ENCODE measurements at regions of chr3 and their contacts with region 1.

Region 1: DNA sequence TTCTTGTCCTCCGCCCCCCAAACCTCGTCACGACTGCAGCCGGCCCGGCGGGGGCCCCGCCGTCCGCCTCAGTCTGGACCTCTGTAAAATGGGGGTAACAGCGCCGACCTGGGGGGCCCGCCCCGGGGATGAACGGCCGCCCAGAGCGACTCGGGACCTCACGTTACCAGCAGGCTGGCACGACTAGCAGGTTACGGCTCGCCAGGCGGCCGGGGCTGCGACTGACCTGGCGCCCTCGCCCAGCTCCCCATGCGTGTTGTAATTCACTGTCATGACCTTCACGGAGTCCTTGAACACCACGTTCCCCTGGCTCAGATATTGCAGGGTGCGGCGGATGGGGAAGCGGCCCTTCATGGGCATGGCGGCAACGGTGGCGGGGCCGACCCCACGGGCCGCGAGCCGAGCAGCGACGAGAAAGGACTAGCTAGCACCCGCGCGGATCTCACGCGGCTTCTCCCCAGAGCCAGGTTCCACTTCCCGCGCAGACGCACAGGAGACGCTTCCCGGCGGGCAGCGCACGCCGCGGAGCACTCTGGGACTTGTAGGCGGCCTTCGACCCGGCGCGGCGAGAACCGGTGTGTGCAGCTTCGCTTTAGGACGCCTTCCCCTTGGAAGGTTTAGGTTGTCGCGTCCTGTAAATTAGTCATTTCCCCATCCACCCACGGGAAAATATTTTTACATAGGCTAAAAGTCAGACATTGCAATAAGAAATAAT is at the start of gene MRPS25:
- DNase-seq: peak; percentile 86 to 90 (median 89)
- H3K4me3 ChIP-seq: peak within 1 kb of the TSS; percentile 19 to 78
- H3K4me3 Mint-ChIP-seq: peak within 1 kb of the TSS; percentile 93 to 99 (median 96)
- H3K27ac ChIP-seq: peak within 1 kb of the TSS; percentile 79
- H3K27ac Mint-ChIP-seq: peak within 1 kb of the TSS; percentile 88 to 98 (median 96)
- H3K4me1 ChIP-seq: peaks cover 18% of the 10 kb centered on the region
- H3K4me1 Mint-ChIP-seq: peaks cover 11 to 34% (median 23%) of the 10 kb centered on the region in 4 donors
- H3K27me3 ChIP-seq: no peaks in the 10 kb centered on the region
- H3K27me3 Mint-ChIP-seq: no peaks in the 10 kb centered on the region
- total RNA-seq, gene MRPS25: 77.1 to 80.3 TPM

Region 2: GRCh38 chr3:14890476-14890875 is 174.5 kb before region 1 on chr3:
- CTCF ChIA-PET with region 1: no interaction called
- POLR2A ChIA-PET with region 1: no interaction called
- intact Hi-C with region 1: no loop called
- DNase-seq: peak in 2 of 5 donors; percentile 14 to 24
- H3K4me3 ChIP-seq: no peak overlapping the region
- H3K4me3 Mint-ChIP-seq: peak overlapping the region in 5 of 8 donors; percentile 23 to 57 (median 29)
- H3K27ac ChIP-seq: no peak overlapping the region
- H3K27ac Mint-ChIP-seq: peak overlapping the region in 4 of 7 donors; percentile 23 to 59 (median 32)
- H3K4me1 ChIP-seq: peaks cover 22% of the 10 kb centered on the region
- H3K4me1 Mint-ChIP-seq: peaks cover 21 to 42% (median 31%) of the 10 kb centered on the region in 4 donors
- H3K27me3 ChIP-seq: no peaks in the 10 kb centered on the region
- H3K27me3 Mint-ChIP-seq: peaks cover 1 to 3% of the 10 kb centered on the region in 2 donors

Region 3: GRCh38 chr3:15051531-15051930 is 13.5 kb before region 1 on chr3:
- CTCF ChIA-PET with region 1: interaction called, 10 read pairs
- POLR2A ChIA-PET with region 1: interaction called, 4 read pairs
- intact Hi-C with region 1: no loop called
- DNase-seq: peak in 4 of 5 donors; percentile 17 to 29 (median 22)
- H3K4me3 ChIP-seq: no peak overlapping the region
- H3K4me3 Mint-ChIP-seq: no peak overlapping the region
- H3K27ac ChIP-seq: no peak overlapping the region
- H3K27ac Mint-ChIP-seq: peak overlapping the region in 5 of 7 donors; percentile 10 to 55 (median 22)
- H3K4me1 ChIP-seq: peaks cover 23% of the 10 kb centered on the region
- H3K4me1 Mint-ChIP-seq: peaks cover 10 to 30% (median 17%) of the 10 kb centered on the region in 4 donors
- H3K27me3 ChIP-seq: no peaks in the 10 kb centered on the region
- H3K27me3 Mint-ChIP-seq: no peaks in the 10 kb centered on the region

Region 4: GRCh38 chr3:15098503-15099363 is 33.7 kb after region 1 on chr3 and contains the start of gene RBSN:
- CTCF ChIA-PET with region 1: interaction called, 4 read pairs
- POLR2A ChIA-PET with region 1: interaction called, 37 read pairs
- intact Hi-C with region 1: loop called (anchors 1 kb)
- DNase-seq: peak; percentile 96 to 98 (median 96)
- H3K4me3 ChIP-seq: peak within 1 kb of the TSS; percentile 61 to 73
- H3K4me3 Mint-ChIP-seq: peak within 1 kb of the TSS; percentile 88 to 99 (median 96)
- H3K27ac ChIP-seq: peak within 1 kb of the TSS; percentile 95
- H3K27ac Mint-ChIP-seq: peak within 1 kb of the TSS; percentile 89 to 99 (median 99)
- H3K4me1 ChIP-seq: peaks cover 22% of the 10 kb centered on the region
- H3K4me1 Mint-ChIP-seq: peaks cover 19 to 35% (median 27%) of the 10 kb centered on the region in 4 donors
- H3K27me3 ChIP-seq: no peaks in the 10 kb centered on the region
- H3K27me3 Mint-ChIP-seq: peaks cover 1 to 2% of the 10 kb centered on the region in 2 donors
- total RNA-seq, gene RBSN: 33.2 to 34.7 TPM

Measured in CD4-positive, alpha-beta memory T cell (primary cell).